ENCODE measurements at regions of chr14 and their contacts with region 1.

Region 1: DNA sequence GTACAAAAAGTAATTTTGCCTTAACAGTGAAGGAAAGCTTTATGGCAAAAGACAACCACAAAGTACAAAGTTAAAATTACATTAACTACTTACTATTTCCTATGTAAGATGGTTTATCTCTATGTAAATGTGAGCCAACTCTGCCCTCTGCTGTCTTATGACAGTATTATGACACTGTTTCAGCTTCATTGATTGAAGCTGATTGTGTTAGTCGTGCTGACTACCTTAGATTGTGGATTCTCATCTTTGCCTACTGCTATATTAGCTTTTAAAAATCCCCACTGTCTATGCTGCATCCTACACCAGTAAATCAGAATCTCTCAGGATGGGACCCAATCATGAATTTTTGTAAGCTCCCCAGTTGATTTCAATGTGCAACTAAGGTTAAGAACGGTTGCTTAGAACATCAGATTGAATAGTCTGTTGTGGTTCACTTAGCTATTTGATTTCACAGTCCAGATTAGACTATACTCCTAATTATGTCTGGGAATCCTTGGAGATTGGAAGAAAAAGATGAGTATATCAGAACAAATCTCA is 12.2 kb upstream of the SPTB start:
- DNase-seq: peak; percentile 36
- ATAC-seq: peak; percentile 91
- H3K4me3 ChIP-seq: no peak overlapping the region
- H3K27ac ChIP-seq: no peak overlapping the region
- H3K4me1 ChIP-seq: no peaks in the 10 kb centered on the region
- H3K27me3 ChIP-seq: 0 out of 4 replicates have a peak, but pooled peaks cover 0 to 4% of the 10 kb centered on the region in 2 experiments
- CTCF ChIP-seq: peak; percentile 42 to 77 (median 62); a peak in 5 of 6 replicates
- EP300 ChIP-seq: no peak
- POLR2A ChIP-seq: no peak
- RAD21 ChIP-seq: peak; percentile 81

Region 2: GRCh38 chr14:64363265-64363846 is 528.6 kb before region 1 on chr14:
- CTCF ChIA-PET with region 1: no interaction called
- POLR2A ChIA-PET with region 1: no interaction called
- RAD21 ChIA-PET with region 1: no interaction called
- SMC1A ChIA-PET with region 1: no interaction called
- in situ Hi-C with region 1: loop called (anchors 25 kb)
- intact Hi-C with region 1: no loop called
- DNase-seq: no peak
- ATAC-seq: no peak
- H3K4me3 ChIP-seq: no peak overlapping the region
- H3K27ac ChIP-seq: no peak overlapping the region
- H3K4me1 ChIP-seq: no peaks in the 10 kb centered on the region
- H3K27me3 ChIP-seq: no peaks in the 10 kb centered on the region
- CTCF ChIP-seq: no peak
- EP300 ChIP-seq: no peak
- POLR2A ChIP-seq: no peak
- RAD21 ChIP-seq: no peak

Region 3: DNA sequence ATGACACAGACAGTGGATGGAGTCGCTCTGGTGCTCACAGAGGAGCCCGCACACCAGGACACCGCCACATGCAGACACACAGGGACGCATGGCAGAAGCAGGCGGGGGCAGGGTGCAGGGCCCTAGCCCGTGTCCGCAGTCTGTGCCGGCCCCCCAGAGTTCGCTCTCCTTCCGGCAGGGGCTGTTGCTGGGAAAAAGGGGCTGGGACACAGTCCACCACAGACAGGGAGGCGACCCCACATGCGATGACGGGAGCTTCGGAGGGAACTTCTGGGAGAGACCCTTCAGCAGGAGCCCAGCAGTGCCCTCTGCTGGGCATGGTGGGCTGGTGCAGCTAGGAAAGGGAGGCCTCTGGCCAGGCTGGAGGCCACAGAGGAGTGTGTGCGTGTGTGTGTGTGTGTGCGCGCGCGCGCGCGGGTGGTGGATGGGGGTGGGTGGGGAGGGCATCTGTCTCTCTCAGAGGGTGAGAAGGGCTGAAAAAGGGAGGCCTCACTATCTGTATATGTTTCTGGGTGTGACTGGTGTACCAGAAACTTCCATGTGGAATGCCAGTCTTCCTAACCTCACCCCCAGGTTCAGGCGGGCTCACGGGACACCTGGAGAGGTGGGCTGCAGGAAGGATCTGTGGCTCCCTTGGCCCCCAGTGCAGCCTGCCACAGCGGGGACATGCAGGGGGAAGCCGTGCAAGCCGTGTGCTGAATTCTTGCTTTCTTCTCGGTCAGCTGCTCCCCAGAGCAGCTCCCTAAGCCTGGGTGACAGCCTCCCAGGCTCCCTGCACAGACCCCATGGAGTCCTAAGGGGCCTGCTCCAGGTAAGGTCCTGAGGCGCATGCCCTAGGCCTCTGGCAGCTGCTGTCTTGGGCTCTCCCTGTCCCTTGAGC is 127.0 kb before region 1 on chr14:
- CTCF ChIA-PET with region 1: interaction called, 29 read pairs
- POLR2A ChIA-PET with region 1: no interaction called
- RAD21 ChIA-PET with region 1: interaction called, 16 read pairs
- SMC1A ChIA-PET with region 1: interaction called, 13 read pairs
- in situ Hi-C with region 1: no loop called
- intact Hi-C with region 1: loop called (anchors 2 kb)
- DNase-seq: no peak
- ATAC-seq: peak; percentile 81
- H3K4me3 ChIP-seq: no peak overlapping the region
- H3K27ac ChIP-seq: no peak overlapping the region
- H3K4me1 ChIP-seq: no peaks in the 10 kb centered on the region
- H3K27me3 ChIP-seq: no peaks in the 10 kb centered on the region; a peak in 1 of 4 replicates
- CTCF ChIP-seq: peak; percentile 81 to 96 (median 85)
- EP300 ChIP-seq: no peak
- POLR2A ChIP-seq: no peak
- RAD21 ChIP-seq: peak; percentile 61

Region 4: DNA sequence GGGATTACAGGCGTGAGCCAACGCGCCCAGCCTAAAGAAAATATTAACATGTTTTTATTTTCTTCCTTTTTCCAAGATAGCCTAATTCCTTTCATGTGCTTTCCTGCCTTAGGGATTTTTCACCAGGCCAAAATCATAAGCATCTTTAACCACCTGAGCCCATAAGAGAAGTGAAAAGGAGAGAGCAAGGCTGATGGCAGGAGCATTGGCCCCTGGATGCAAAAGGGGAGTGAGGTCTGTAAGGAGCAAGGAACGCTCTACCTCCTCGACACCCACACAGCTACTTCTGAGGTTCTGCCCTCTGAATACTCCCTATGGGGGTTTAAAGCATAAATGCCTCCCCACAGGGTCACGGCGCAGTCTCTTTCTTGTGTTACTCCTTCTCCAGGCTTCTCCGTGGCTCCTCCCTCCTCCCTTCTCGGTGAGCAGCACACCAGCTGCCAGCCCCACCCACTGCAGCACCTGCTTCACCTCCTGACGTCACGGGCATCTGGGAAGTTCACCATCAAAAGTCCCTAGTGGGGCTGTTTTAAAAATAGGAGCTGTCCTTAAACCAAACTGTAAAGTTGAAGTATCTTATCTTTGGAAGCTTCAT is 79.6 kb before region 1 on chr14:
- CTCF ChIA-PET with region 1: interaction called, 20 read pairs
- POLR2A ChIA-PET with region 1: no interaction called
- RAD21 ChIA-PET with region 1: interaction called, 8 read pairs
- SMC1A ChIA-PET with region 1: interaction called, 4 read pairs
- in situ Hi-C with region 1: no loop called
- intact Hi-C with region 1: no loop called
- DNase-seq: no peak
- ATAC-seq: peak; percentile 93
- H3K4me3 ChIP-seq: no peak overlapping the region
- H3K27ac ChIP-seq: no peak overlapping the region
- H3K4me1 ChIP-seq: no peaks in the 10 kb centered on the region
- H3K27me3 ChIP-seq: peaks cover 0 to 3% of the 10 kb centered on the region in 2 experiments; a peak in 2 of 4 replicates
- CTCF ChIP-seq: no peak
- EP300 ChIP-seq: no peak
- POLR2A ChIP-seq: no peak
- RAD21 ChIP-seq: no peak

Region 5: GRCh38 chr14:64830961-64831360 is 60.9 kb before region 1 on chr14:
- CTCF ChIA-PET with region 1: interaction called, 21 read pairs
- POLR2A ChIA-PET with region 1: no interaction called
- RAD21 ChIA-PET with region 1: interaction called, 6 read pairs
- SMC1A ChIA-PET with region 1: interaction called, 88 read pairs
- in situ Hi-C with region 1: no loop called
- intact Hi-C with region 1: no loop called
- DNase-seq: no peak
- ATAC-seq: peak; percentile 52
- H3K4me3 ChIP-seq: no peak overlapping the region
- H3K27ac ChIP-seq: no peak overlapping the region
- H3K4me1 ChIP-seq: no peaks in the 10 kb centered on the region
- H3K27me3 ChIP-seq: no peaks in the 10 kb centered on the region
- CTCF ChIP-seq: no peak
- EP300 ChIP-seq: no peak
- POLR2A ChIP-seq: no peak
- RAD21 ChIP-seq: no peak

Region 6: DNA sequence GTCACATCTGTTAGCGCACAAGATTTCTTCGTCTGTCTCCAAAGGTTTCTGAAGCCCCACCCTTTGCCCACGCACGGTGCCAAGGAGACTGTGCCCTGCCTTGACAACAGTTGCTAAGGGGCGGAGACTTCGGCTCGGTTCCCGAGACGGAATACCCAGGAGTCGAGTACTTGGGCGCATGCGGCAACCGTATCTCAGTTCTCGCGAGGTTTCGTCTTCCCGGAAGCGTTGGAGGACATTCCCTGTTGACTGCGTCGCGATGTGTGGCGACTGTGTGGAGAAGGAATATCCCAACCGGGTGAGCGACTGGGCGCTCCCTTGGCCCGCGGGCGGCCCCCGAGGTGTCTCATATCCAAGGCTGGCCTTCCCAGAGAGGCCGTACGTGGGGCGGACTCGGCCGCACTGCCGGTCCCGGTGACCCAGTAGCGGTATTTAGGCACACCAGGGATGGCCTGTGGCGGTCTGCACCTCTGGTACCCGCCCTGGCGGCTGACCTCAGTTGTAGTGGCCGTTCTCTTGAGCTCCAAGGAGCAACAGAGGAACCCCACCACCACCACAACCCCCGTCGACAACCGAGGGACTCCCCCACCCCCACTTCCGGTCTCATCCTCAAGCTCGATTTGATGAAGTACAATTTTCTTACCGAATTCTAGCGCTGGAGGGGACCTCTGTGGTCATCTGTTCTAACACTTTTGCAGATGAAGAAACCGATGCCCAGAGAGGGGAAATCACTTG is 22.5 kb after region 1 on chr14 and contains the start of gene CHURC1:
- CTCF ChIA-PET with region 1: interaction called, 20 read pairs
- POLR2A ChIA-PET with region 1: no interaction called
- RAD21 ChIA-PET with region 1: interaction called, 6 read pairs
- SMC1A ChIA-PET with region 1: interaction called, 12 read pairs
- in situ Hi-C with region 1: no loop called
- intact Hi-C with region 1: no loop called
- DNase-seq: peak; percentile 93
- ATAC-seq: peak; percentile 98
- H3K4me3 ChIP-seq: peak within 1 kb of the TSS; percentile 79
- H3K27ac ChIP-seq: peak within 1 kb of the TSS; percentile 98
- H3K4me1 ChIP-seq: peaks cover 5% of the 10 kb centered on the region; the same call in 1 of the 2 replicates
- H3K27me3 ChIP-seq: no peaks in the 10 kb centered on the region
- CTCF ChIP-seq: no peak
- EP300 ChIP-seq: no peak
- POLR2A ChIP-seq: peak; percentile 96
- RAD21 ChIP-seq: no peak
- polyA plus RNA-seq, gene CHURC1: 408 to 421 TPM

Region 7: GRCh38 chr14:64986578-64987571 is 95.0 kb after region 1 on chr14 and contains the start of gene FNTB:
- CTCF ChIA-PET with region 1: interaction called, 25 read pairs
- POLR2A ChIA-PET with region 1: no interaction called
- RAD21 ChIA-PET with region 1: interaction called, 8 read pairs
- SMC1A ChIA-PET with region 1: interaction called, 18 read pairs
- in situ Hi-C with region 1: no loop called
- intact Hi-C with region 1: no loop called
- DNase-seq: peak; percentile 94
- ATAC-seq: peak; percentile 99
- H3K4me3 ChIP-seq: peak within 1 kb of the TSS; percentile 93
- H3K27ac ChIP-seq: peak within 1 kb of the TSS; percentile 80
- H3K4me1 ChIP-seq: peaks cover 26% of the 10 kb centered on the region
- H3K27me3 ChIP-seq: no peaks in the 10 kb centered on the region
- CTCF ChIP-seq: peak; percentile 78 to 99 (median 97); a peak in 5 of 6 replicates
- EP300 ChIP-seq: no peak
- POLR2A ChIP-seq: peak; percentile 82
- RAD21 ChIP-seq: peak; percentile 94
- polyA plus RNA-seq, gene FNTB: 10.4 to 14.2 TPM

Measured in GM12878 (cell line).